ENCODE measurements at regions of chr3 and their contacts with region 1.

Region 1: DNA sequence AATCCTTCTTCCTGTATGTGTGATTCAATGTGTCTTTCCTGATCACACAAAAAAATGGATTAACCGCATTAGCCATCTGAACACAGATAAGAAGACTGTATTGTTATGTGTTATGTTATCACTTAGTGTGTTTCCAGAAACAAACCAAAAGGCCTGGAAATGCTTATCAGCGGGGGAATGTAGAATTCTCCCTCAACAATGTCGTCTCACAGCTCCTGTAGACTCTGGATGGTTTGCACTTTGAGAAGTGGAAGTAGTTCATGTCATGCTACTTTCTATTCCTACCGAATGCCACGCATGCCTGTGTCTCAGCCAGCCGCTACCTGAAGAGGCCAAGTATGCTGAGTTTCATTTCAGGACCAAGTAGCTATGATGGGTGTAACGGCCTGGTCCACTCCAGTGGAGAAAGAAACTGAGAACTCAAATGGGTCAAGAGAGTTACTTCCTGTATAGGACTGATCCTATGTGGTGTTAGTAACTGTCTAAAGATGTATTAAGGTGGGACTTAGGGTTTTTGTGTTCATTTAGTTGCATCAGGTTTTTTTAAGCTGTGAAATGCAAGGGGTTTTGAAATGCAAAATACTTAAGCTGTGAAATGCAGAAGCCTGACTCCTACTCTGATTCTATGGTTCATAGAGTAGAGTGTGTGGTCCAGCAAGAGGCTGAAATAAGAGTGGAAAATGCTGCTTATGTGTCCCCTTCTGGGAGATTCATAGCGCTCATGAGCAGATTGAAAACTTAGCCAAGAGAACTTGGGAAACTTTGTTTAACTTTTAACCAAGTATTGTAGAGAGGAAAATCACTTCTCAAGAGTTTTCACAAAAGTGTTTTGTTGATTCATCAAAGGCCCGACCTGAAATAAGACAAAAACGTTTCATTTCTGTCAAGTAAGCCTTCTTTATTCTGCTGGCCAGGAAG is 118.5 kb upstream of the LMOD3 start:
- DNase-seq: no peak
- H3K4me3 ChIP-seq: no peak overlapping the region
- H3K27ac ChIP-seq: no peak overlapping the region
- H3K4me1 ChIP-seq: peaks cover 30% of the 10 kb centered on the region
- H3K27me3 ChIP-seq: no peaks in the 10 kb centered on the region
- CTCF ChIP-seq: no peak

Region 2: GRCh38 chr3:69288161-69288895 is 47.4 kb after region 1 on chr3:
- CTCF ChIA-PET with region 1: no interaction called
- POLR2A ChIA-PET with region 1: interaction called, 5 read pairs
- intact Hi-C with region 1: loop called (anchors 2 kb)
- DNase-seq: peak in 1 of 2 experiments; percentile 29
- H3K4me3 ChIP-seq: no peak overlapping the region
- H3K27ac ChIP-seq: no peak overlapping the region; the same call in 1 of the 2 replicates
- H3K4me1 ChIP-seq: peaks cover 7% of the 10 kb centered on the region; the same call in 1 of the 2 replicates
- H3K27me3 ChIP-seq: no peaks in the 10 kb centered on the region
- CTCF ChIP-seq: no peak

Region 3: GRCh38 chr3:69306239-69307185 is 65.6 kb after region 1 on chr3:
- CTCF ChIA-PET with region 1: interaction called, 6 read pairs
- POLR2A ChIA-PET with region 1: interaction called, 5 read pairs
- intact Hi-C with region 1: loop called (anchors 2 kb)
- DNase-seq: peak; percentile 58 to 70
- H3K4me3 ChIP-seq: no peak overlapping the region
- H3K27ac ChIP-seq: peak overlapping the region; percentile 29; the same call in 1 of the 2 replicates
- H3K4me1 ChIP-seq: peaks cover 12% of the 10 kb centered on the region; the same call in 1 of the 2 replicates
- H3K27me3 ChIP-seq: no peaks in the 10 kb centered on the region
- CTCF ChIP-seq: peak; percentile 87

Region 4: DNA sequence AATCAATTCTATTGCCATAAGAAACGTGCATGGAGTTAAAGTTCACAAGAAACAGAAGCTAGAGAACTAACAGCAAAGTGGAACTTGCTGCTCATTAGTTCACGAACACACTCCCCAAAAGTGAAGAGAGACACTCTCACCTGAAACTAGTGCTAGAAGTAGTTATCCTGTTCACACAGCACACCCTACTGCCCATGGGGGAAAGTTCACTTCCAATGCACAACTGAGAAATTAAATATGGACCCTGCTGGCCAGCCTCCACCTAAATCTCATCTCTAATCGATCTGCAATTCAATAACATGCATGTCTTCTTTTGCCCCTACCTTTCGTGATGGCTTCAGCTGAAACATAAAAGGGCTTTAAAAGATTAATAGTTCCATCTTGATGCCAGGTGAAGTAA is 184.4 kb after region 1 on chr3:
- CTCF ChIA-PET with region 1: no interaction called
- POLR2A ChIA-PET with region 1: no interaction called
- intact Hi-C with region 1: no loop called
- DNase-seq: peak in 1 of 2 experiments; percentile 34
- H3K4me3 ChIP-seq: no peak overlapping the region
- H3K27ac ChIP-seq: no peak overlapping the region
- H3K4me1 ChIP-seq: no peaks in the 10 kb centered on the region
- H3K27me3 ChIP-seq: no peaks in the 10 kb centered on the region
- CTCF ChIP-seq: peak; percentile 55; the same call in 1 of the 2 replicates